B cell (primary cell): ENCODE measurements at regions of chr6 and their contacts with region 1.

Region 1: DNA sequence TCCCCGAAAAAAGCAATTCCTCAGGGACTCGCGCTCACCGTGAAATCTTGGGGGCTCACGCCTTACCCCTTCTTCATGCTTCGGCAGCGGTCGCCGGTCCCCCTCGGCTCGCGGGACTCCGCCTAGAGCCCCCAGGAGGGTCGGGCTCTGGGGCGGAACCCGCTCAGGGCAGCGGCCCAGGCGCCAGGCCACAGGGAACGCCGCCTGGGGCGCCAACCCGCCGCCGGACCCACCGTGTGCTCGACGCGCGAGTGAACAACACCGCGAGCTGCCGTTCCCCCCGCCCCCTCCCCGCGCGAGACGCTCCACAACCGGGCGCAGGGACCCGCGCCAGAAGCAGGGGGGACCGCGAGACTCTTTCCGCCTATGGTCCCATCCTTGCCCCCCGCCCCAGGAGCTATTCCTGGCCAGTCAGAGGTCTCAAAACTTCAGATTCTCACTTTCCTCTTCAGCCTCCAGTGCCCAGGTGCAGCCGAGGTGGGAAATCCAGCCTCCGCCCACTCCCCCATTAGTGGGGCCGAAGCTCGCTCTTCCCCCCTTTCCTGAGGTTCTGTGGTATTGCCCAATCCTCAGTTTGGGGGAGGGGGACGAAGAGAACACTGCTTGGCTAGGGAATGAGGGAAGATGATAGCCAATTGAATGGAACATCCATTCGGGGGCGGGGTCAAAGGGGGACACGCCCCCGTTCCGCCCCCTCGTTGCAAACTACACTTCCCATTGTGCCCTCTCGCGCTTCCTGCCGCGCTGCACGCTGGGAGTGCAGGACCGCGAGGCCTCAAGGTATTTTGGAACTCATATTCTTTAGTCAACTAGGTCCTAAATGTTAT is at the start of gene WASF1:
- DNase-seq: peak; percentile 95
- ATAC-seq: peak; percentile 78
- H3K4me3 ChIP-seq: peak within 1 kb of the TSS; percentile 66 to 100 (median 90)
- H3K4me3 Mint-ChIP-seq: no peak within 1 kb of the TSS
- H3K27ac ChIP-seq: peak within 1 kb of the TSS; percentile 72 to 88
- H3K27ac Mint-ChIP-seq: peak within 1 kb of the TSS; percentile 94
- H3K4me1 ChIP-seq: peaks cover 27 to 36% of the 10 kb centered on the region in 2 donors
- H3K4me1 Mint-ChIP-seq: peaks cover 8% of the 10 kb centered on the region
- H3K27me3 ChIP-seq: no peaks in the 10 kb centered on the region
- H3K27me3 Mint-ChIP-seq: no peaks in the 10 kb centered on the region
- CTCF ChIP-seq: no peak
- total RNA-seq, gene WASF1: 8.4 and 10.8 TPM in 2 replicates

Region 2: GRCh38 chr6:109095027-109095834 is 1084.4 kb before region 1 on chr6 and contains the start of gene CEP57L1:
- CTCF ChIA-PET with region 1: no interaction called
- POLR2A ChIA-PET with region 1: no interaction called
- intact Hi-C with region 1: loop called (anchors 1 kb)
- DNase-seq: peak; percentile 97
- ATAC-seq: peak; percentile 67
- H3K4me3 ChIP-seq: peak within 1 kb of the TSS; percentile 69 to 98 (median 85)
- H3K4me3 Mint-ChIP-seq: peak within 1 kb of the TSS; percentile 99
- H3K27ac ChIP-seq: peak within 1 kb of the TSS; percentile 95 to 98
- H3K27ac Mint-ChIP-seq: peak within 1 kb of the TSS; percentile 100
- H3K4me1 ChIP-seq: peaks cover 28 to 29% of the 10 kb centered on the region in 2 donors
- H3K4me1 Mint-ChIP-seq: peaks cover 44% of the 10 kb centered on the region
- H3K27me3 ChIP-seq: no peaks in the 10 kb centered on the region
- H3K27me3 Mint-ChIP-seq: no peaks in the 10 kb centered on the region
- CTCF ChIP-seq: no peak
- total RNA-seq, gene CEP57L1: 7.7 and 8.8 TPM in 2 replicates

Region 3: DNA sequence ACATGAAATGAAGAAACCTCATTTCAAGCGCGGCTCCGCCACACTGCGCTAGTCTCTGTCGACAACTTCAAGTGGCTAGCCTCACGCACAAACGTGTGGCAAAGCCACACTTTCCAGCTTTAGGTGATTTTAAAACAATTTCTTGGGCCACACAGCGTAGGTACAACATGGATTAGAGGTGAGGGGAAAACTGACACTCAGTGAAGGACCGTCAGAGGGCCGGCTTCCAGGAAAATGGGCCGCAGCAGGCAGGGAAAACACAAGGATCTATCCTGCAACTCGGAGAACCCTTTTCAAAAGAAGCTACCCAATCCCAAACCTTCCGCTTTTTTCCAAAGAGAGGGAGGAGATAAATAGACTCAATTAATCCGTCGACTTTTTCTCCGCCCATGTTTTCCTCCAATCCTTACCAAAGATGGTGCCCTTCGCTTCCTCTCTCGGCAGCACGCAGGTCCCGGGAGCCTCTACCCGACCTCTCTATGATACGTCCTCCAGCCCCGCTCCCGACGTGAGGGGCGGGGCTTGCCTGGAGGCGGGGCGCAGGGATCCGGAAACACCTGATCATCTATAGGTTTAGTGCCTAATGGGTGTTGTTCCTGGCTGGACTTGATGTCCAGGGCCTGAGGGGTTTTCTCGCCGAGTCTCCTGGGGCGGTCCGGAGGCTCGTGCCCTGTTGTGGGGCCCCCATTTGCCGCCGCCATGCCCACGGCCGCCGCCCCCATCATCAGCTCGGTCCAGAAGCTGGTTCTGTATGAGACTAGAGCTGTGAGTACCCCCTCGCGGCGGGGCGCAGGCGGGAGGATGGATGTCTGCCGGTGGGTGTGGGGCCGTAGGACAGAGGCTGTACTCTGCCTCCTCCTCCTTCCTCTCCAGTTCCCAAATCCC is 488.6 kb before region 1 on chr6 and contains the starts of genes AK9 and FIG4:
- CTCF ChIA-PET with region 1: interaction called, 5 read pairs
- POLR2A ChIA-PET with region 1: no interaction called
- intact Hi-C with region 1: loop called (anchors 1 kb)
- DNase-seq: peak; percentile 91
- ATAC-seq: peak; percentile 92
- H3K4me3 ChIP-seq: peak within 1 kb of the TSS; percentile 82 to 99 (median 93)
- H3K4me3 Mint-ChIP-seq: peak within 1 kb of the TSS; percentile 90
- H3K27ac ChIP-seq: peak within 1 kb of the TSS; percentile 77 to 93
- H3K27ac Mint-ChIP-seq: peak within 1 kb of the TSS; percentile 99
- H3K4me1 ChIP-seq: peaks cover 26 to 29% of the 10 kb centered on the region in 2 donors
- H3K4me1 Mint-ChIP-seq: peaks cover 39% of the 10 kb centered on the region
- H3K27me3 ChIP-seq: no peaks in the 10 kb centered on the region
- H3K27me3 Mint-ChIP-seq: no peaks in the 10 kb centered on the region
- CTCF ChIP-seq: peak; percentile 26
- total RNA-seq, gene AK9: 26.5 and 27.1 TPM in 2 replicates
- total RNA-seq, gene FIG4: 31.5 and 32.8 TPM in 2 replicates

Region 4: DNA sequence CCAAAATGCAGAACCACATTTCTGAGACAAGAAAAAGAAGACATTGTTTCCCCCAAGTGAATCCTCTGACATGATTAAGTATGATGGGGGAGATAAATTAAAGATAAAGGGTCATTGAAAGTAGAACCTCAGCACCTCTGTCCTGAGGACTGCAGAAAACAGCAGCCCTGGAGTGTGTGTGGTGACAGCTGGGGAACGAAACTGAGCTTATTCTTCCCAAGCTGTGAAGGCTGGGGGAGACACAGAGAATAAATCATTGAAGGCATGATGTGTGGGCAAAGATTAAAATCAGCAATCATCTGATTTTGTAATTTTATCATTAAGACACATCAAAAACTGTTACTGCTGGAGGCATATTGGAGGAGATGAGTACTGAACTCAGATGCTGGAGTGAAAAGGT is 269.0 kb before region 1 on chr6:
- CTCF ChIA-PET with region 1: no interaction called
- POLR2A ChIA-PET with region 1: no interaction called
- intact Hi-C with region 1: no loop called
- DNase-seq: no peak
- ATAC-seq: no peak
- H3K4me3 ChIP-seq: no peak overlapping the region
- H3K4me3 Mint-ChIP-seq: no peak overlapping the region
- H3K27ac ChIP-seq: no peak overlapping the region
- H3K27ac Mint-ChIP-seq: no peak overlapping the region
- H3K4me1 ChIP-seq: no peaks in the 10 kb centered on the region
- H3K4me1 Mint-ChIP-seq: no peaks in the 10 kb centered on the region
- H3K27me3 ChIP-seq: peaks cover 0 to 3% (median 0%) of the 10 kb centered on the region in 4 experiments
- H3K27me3 Mint-ChIP-seq: peaks cover 11% of the 10 kb centered on the region
- CTCF ChIP-seq: no peak

Region 5: DNA sequence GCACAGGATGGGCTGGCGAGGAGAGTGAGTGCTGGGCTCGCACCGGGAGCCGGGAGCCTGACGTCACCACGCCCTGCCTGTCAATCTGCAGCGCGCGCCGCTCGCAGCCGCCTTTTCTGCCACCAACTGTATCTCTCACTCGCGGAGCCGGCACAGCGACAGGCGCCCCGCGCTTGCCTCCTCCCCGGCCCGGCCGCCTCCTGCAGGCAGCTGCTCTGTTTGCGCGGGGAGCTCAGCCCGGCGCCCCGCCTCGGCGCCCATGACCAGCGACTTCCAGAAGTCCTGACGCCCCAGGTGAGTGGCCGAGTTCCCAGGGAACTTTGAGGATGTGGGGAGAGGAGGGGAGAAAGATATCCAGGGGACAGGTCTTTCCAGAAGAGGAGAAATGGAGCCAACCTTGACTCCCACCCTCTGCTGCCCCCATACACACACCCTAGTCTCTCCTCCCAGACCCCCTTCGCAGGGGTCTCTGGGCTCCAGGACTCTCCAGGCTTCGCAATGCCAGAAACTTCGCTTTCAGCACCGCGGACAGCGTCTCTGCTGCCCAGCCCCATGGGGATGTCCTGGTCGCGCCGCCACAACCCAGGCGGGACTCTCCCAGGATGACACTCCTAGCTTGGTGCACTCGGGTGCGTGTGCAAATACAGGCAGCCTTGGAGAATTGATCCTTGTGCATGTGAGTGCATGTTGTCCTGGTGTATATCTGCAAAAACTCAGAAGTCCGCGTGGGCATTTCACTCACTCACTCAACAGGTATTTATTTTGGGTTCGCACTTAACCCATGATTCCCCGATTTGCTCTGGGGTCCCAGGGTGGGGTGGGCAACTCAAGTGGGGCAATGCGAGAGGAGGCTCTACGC is 201.2 kb before region 1 on chr6 and contains the start of gene GPR6:
- CTCF ChIA-PET with region 1: no interaction called
- POLR2A ChIA-PET with region 1: no interaction called
- intact Hi-C with region 1: no loop called
- DNase-seq: peak; percentile 52
- ATAC-seq: no peak
- H3K4me3 ChIP-seq: no peak within 1 kb of the TSS
- H3K4me3 Mint-ChIP-seq: no peak within 1 kb of the TSS
- H3K27ac ChIP-seq: no peak within 1 kb of the TSS
- H3K27ac Mint-ChIP-seq: no peak within 1 kb of the TSS
- H3K4me1 ChIP-seq: peaks cover 0 to 9% of the 10 kb centered on the region in 2 donors
- H3K4me1 Mint-ChIP-seq: no peaks in the 10 kb centered on the region
- H3K27me3 ChIP-seq: peaks cover 0 to 57% (median 18%) of the 10 kb centered on the region in 4 experiments
- H3K27me3 Mint-ChIP-seq: peaks cover 67% of the 10 kb centered on the region
- CTCF ChIP-seq: no peak
- total RNA-seq, gene GPR6: not detected in 2 replicates

Region 6: GRCh38 chr6:110201151-110201884 is 21.7 kb after region 1 on chr6:
- CTCF ChIA-PET with region 1: interaction called, 76 read pairs
- POLR2A ChIA-PET with region 1: interaction called, 6 read pairs
- intact Hi-C with region 1: loop called (anchors 1 kb)
- DNase-seq: no peak
- ATAC-seq: no peak
- H3K4me3 ChIP-seq: no peak overlapping the region
- H3K4me3 Mint-ChIP-seq: no peak overlapping the region
- H3K27ac ChIP-seq: peak overlapping the region in 1 of 2 donors; percentile 47
- H3K27ac Mint-ChIP-seq: peak overlapping the region; percentile 71
- H3K4me1 ChIP-seq: peaks cover 22 to 33% of the 10 kb centered on the region in 2 donors
- H3K4me1 Mint-ChIP-seq: peaks cover 51% of the 10 kb centered on the region
- H3K27me3 ChIP-seq: no peaks in the 10 kb centered on the region
- H3K27me3 Mint-ChIP-seq: no peaks in the 10 kb centered on the region
- CTCF ChIP-seq: no peak

Region 7: DNA sequence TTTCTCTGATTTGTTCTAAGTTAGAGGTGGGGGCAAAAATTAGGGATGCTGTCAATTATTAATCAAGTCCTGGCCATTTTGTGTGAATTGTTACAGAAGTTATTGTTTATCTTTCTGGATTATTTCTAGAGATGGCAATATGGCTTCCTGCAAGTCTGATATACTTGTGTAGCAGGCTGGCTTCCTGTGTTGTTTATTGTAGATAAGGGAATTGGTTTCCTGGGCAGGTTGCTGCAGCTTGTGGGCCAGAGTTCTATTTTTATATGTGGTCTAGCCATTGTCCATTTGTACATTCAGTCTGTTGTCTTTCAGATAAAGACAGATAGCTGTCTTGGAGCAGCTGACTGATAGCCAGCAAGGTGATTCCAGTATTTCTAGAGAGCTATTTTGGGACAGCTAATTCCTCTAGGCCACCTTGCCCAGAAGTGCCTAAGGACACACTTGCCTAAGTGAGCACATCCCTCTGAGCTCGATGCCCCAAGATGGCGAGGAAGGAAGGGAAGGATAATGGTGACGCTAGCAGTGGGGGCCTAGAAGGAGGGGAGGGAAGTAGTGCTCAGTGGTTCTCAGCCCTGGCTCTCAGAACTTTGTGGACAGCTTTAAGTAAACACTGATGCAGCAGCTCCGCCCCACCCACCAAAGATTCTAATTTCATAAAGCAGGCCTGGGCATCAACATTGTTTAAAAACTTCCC is 210.2 kb after region 1 on chr6:
- CTCF ChIA-PET with region 1: interaction called, 90 read pairs
- POLR2A ChIA-PET with region 1: no interaction called
- intact Hi-C with region 1: loop called (anchors 1 kb)
- DNase-seq: no peak
- ATAC-seq: no peak
- H3K4me3 ChIP-seq: no peak overlapping the region
- H3K4me3 Mint-ChIP-seq: no peak overlapping the region
- H3K27ac ChIP-seq: no peak overlapping the region
- H3K27ac Mint-ChIP-seq: no peak overlapping the region
- H3K4me1 ChIP-seq: no peaks in the 10 kb centered on the region
- H3K4me1 Mint-ChIP-seq: no peaks in the 10 kb centered on the region
- H3K27me3 ChIP-seq: no peaks in the 10 kb centered on the region
- H3K27me3 Mint-ChIP-seq: no peaks in the 10 kb centered on the region
- CTCF ChIP-seq: no peak

Region 8: DNA sequence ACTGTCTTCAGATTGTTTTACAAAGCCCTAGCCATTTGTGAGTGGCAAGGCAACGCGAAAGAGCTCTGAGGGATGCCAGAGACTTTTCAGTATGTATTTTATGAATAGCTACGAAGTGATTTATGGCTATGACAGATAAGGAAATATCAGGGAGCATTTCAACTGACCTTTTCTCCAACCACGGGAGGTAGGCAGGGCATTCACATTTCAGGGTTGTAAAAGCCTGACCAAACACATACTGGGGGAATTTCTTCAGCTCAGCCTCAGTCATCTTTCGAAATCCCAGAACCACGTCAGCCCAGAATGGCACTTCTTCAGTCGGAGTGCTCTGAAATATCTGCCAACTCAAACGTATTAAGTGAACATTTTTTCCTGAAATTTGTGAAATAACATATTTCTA is 225.0 kb after region 1 on chr6:
- CTCF ChIA-PET with region 1: no interaction called
- POLR2A ChIA-PET with region 1: no interaction called
- intact Hi-C with region 1: no loop called
- DNase-seq: no peak
- ATAC-seq: no peak
- H3K4me3 ChIP-seq: no peak overlapping the region
- H3K4me3 Mint-ChIP-seq: no peak overlapping the region
- H3K27ac ChIP-seq: no peak overlapping the region
- H3K27ac Mint-ChIP-seq: no peak overlapping the region
- H3K4me1 ChIP-seq: no peaks in the 10 kb centered on the region
- H3K4me1 Mint-ChIP-seq: no peaks in the 10 kb centered on the region
- H3K27me3 ChIP-seq: no peaks in the 10 kb centered on the region
- H3K27me3 Mint-ChIP-seq: peaks cover 6% of the 10 kb centered on the region
- CTCF ChIP-seq: no peak

Region 9: DNA sequence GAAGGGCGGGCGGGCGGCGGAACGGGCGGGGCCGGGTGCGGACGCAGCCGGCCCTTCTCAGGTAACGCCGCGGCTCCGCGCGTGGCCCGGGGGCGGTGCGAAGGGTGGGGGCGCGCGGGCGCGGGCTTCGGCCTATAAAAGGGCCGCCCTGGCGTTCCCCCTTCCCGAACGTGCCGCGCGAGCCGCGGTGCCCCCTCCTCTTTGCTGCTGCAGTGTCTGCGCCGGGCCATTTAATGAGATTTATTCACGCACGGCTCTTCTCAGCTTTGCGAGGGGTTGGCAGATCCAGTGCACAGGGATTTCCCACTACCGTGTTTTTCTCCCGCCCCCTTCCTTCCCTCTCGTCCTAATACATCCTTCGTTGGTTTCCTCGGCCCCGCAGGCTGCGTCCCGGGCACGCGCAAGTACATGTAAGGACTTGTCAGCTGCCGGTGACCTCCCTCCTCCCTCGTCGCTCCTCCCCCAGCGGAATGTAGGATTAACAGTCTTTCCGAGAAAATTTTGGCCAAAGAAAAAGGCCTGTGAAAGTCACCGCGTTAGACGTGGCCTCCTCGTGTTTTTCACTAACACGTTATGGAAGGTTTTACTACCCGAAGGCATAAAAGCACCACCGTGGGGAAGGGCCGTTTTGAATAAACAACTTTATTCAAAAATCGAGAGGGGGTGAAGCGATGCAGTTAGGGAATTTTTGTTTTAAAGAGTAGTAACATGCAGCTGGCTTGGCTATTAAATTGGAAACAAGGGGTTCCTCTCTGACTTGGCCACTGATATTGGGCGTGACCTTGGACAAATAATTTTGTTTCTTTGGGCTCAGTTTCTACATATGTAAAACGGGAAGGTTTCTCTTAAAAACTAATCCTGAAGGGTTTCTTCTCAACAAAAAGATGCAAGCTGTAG is 1304.4 kb after region 1 on chr6:
- CTCF ChIA-PET with region 1: no interaction called
- POLR2A ChIA-PET with region 1: no interaction called
- intact Hi-C with region 1: loop called (anchors 10 kb)
- DNase-seq: no peak
- ATAC-seq: peak; percentile 68
- H3K4me3 ChIP-seq: peak overlapping the region; percentile 72 to 97 (median 88)
- H3K4me3 Mint-ChIP-seq: peak overlapping the region; percentile 96
- H3K27ac ChIP-seq: peak overlapping the region; percentile 98 to 99
- H3K27ac Mint-ChIP-seq: peak overlapping the region; percentile 99
- H3K4me1 ChIP-seq: peaks cover 16 to 18% of the 10 kb centered on the region in 2 donors
- H3K4me1 Mint-ChIP-seq: peaks cover 45% of the 10 kb centered on the region
- H3K27me3 ChIP-seq: no peaks in the 10 kb centered on the region
- H3K27me3 Mint-ChIP-seq: no peaks in the 10 kb centered on the region
- CTCF ChIP-seq: no peak